ENCODE measurements at regions of chr16 and their contacts with region 1.

Region 1: GRCh38 chr16:71961066-71962039 is 38.8 kb downstream of the PKD1L3 start:
- DNase-seq: peak; percentile 88
- H3K4me3 Mint-ChIP-seq: no peak overlapping the region
- H3K27ac Mint-ChIP-seq: no peak overlapping the region
- H3K4me1 Mint-ChIP-seq: no peaks in the 10 kb centered on the region
- H3K27me3 Mint-ChIP-seq: no peaks in the 10 kb centered on the region
- CTCF ChIP-seq: peak; percentile 83

Region 2: GRCh38 chr16:71645453-71645852 is 315.9 kb before region 1 on chr16:
- CTCF ChIA-PET with region 1: no interaction called
- intact Hi-C with region 1: loop called (anchors 10 kb)
- DNase-seq: peak; percentile 36
- H3K4me3 Mint-ChIP-seq: no peak overlapping the region
- H3K27ac Mint-ChIP-seq: no peak overlapping the region
- H3K4me1 Mint-ChIP-seq: no peaks in the 10 kb centered on the region
- H3K27me3 Mint-ChIP-seq: no peaks in the 10 kb centered on the region
- CTCF ChIP-seq: peak; percentile 73

Region 3: GRCh38 chr16:71775949-71776348 is 185.4 kb before region 1 on chr16:
- CTCF ChIA-PET with region 1: no interaction called
- intact Hi-C with region 1: loop called (anchors 10 kb)
- DNase-seq: no peak
- H3K4me3 Mint-ChIP-seq: no peak overlapping the region
- H3K27ac Mint-ChIP-seq: no peak overlapping the region
- H3K4me1 Mint-ChIP-seq: peaks cover 14% of the 10 kb centered on the region
- H3K27me3 Mint-ChIP-seq: no peaks in the 10 kb centered on the region
- CTCF ChIP-seq: no peak

Region 4: DNA sequence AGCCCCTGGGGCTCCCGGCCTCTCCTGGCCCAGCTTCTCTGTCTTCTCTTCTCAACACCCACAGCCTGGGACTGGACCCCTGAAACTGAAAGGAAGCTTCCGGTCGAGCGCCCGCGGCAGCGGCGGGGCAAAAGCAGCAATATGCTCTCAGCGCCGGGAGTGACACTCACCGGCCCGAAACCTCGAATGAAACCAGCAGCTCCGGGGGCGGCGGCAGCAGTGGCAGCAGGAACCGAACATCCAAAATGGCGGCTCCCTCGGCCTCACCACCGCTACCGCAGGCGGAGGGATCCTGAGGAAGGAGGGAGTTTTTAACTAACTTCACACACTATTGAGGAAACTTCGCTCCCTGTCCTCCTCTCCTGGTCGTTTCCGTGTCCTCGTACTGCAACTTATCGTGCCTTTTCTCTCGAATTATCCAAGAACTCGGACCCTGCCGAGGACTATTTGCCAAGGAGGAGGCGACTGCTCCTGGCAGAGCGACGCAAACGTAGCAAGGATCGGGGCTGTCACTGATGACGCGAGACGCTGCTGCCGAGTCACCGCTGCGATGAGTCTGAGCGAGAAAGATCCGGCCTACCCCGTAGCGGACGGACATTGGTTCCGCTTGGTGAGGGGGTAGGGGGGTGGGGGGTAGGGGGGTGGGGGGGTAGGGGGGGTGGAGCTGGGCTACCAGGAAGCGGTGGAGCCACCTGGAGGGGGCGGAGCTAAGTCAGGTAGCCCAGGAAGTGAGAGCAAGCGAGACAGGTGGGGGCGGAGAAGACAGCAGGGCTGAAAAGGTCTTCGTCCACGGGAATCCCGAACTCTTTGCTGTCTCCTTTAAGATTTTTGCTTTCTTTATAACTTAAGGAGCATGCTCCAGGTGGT is 152.5 kb before region 1 on chr16 and contains the start of gene AP1G1:
- CTCF ChIA-PET with region 1: no interaction called
- intact Hi-C with region 1: loop called (anchors 5 kb)
- DNase-seq: peak; percentile 95
- H3K4me3 Mint-ChIP-seq: peak within 1 kb of the TSS; percentile 90
- H3K27ac Mint-ChIP-seq: peak within 1 kb of the TSS; percentile 97
- H3K4me1 Mint-ChIP-seq: no peaks in the 10 kb centered on the region
- H3K27me3 Mint-ChIP-seq: no peaks in the 10 kb centered on the region
- CTCF ChIP-seq: no peak
- total RNA-seq, gene AP1G1: 144 and 152 TPM in 2 replicates

Region 5: GRCh38 chr16:71883849-71884638 is 77.3 kb before region 1 on chr16 and contains the start of gene ZNF821:
- CTCF ChIA-PET with region 1: interaction called, 26 read pairs
- intact Hi-C with region 1: loop called (anchors 2 kb)
- DNase-seq: peak; percentile 90
- H3K4me3 Mint-ChIP-seq: peak within 1 kb of the TSS; percentile 96
- H3K27ac Mint-ChIP-seq: peak within 1 kb of the TSS; percentile 87
- H3K4me1 Mint-ChIP-seq: peaks cover 22% of the 10 kb centered on the region
- H3K27me3 Mint-ChIP-seq: no peaks in the 10 kb centered on the region
- CTCF ChIP-seq: peak; percentile 75
- total RNA-seq, gene ZNF821: 12.3 and 13.1 TPM in 2 replicates

Region 6: DNA sequence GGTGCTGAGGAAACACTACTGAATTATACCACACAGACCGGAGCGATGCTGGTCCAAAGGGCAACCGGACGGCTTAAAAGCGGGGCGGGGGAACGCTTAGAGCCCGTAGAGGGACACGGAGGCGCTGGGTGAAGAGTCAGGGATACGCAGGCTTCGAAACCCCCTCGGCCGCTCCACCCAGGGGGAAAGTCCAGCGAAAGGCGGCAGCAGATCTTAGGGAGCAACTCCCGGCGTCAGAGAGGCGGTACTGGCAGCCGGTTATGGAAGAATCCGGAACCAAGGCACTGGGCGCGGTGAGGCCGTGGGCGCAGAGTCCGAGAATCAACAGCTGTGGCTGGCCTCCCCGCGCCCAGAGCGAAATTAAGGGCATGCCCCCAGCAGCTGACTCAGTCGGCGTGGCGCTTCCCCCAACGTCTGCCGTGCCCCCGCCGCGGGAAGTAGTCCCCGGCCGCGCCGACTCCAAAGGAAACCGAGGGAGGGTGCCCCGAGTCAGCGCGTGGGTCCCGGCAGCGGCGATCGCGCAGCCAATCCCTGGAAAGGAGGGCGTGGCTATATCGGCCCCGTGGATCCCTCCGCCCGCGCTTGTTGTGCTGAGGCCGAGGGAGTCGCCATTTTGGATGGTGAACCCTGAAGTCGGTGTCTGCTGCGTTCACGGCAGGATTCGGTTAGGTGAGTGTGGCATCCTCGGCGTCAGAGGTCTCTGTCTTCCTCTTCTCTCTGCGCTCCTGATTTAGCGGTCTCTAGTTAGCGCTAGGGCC is 66.3 kb before region 1 on chr16 and contains the start of gene IST1:
- CTCF ChIA-PET with region 1: interaction called, 7 read pairs
- intact Hi-C with region 1: loop called (anchors 2 kb)
- DNase-seq: peak; percentile 99
- H3K4me3 Mint-ChIP-seq: peak within 1 kb of the TSS; percentile 82
- H3K27ac Mint-ChIP-seq: peak within 1 kb of the TSS; percentile 85
- H3K4me1 Mint-ChIP-seq: peaks cover 12% of the 10 kb centered on the region
- H3K27me3 Mint-ChIP-seq: no peaks in the 10 kb centered on the region
- CTCF ChIP-seq: no peak
- total RNA-seq, gene IST1: 252 and 269 TPM in 2 replicates

Region 7: GRCh38 chr16:72300892-72301291 is 339.5 kb after region 1 on chr16:
- CTCF ChIA-PET with region 1: no interaction called
- intact Hi-C with region 1: no loop called
- DNase-seq: no peak
- H3K4me3 Mint-ChIP-seq: no peak overlapping the region
- H3K27ac Mint-ChIP-seq: no peak overlapping the region
- H3K4me1 Mint-ChIP-seq: peaks cover 7% of the 10 kb centered on the region
- H3K27me3 Mint-ChIP-seq: no peaks in the 10 kb centered on the region
- CTCF ChIP-seq: no peak

Measured in Calu3 (cell line).